PC-9 (cell line): ENCODE measurements at regions of chr19 and their contacts with region 1.

Region 1: DNA sequence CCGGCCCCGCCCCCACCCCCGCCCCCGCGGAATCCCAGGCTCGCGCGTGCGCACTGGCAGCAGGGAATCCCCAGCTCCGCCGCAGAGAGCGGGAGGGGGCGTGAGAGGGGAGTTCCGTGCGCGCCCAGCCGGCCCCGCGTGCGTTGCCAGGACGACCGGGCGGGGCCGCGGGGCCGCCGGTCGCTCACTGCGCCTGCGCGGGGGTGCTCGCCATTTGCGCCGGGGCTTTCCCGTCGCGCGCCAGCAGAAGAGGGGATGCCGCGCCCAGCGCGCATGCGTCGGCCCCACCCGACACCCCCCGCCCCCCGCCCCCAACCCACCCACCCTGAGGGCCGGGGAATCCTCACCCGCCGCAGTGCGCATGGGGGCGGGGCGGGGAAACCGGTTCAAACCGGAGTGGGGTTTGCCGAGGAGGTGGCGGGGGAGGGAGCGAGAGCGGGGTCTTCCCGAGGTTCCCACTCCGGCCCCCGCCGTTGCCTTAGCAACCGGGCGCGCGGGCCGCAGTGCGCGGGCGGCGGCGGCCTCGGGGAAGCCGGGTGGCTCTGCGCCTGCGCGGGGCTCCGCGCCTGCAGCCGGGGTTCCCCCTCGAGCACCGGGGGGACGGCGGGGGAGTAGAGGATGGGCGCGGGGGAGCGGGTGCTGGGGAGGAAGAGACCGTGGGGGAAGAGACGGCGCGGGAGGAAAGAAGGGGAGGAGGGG is 15.1 kb downstream of the CCDC124 start:
- DNase-seq: peak; percentile 76 to 95
- H3K4me3 ChIP-seq: peak overlapping the region; percentile 62; the same call in 1 of the 2 replicates
- H3K27ac ChIP-seq: no peak overlapping the region
- H3K4me1 ChIP-seq: peaks cover 26% of the 10 kb centered on the region
- H3K27me3 ChIP-seq: peaks cover 41% of the 10 kb centered on the region
- CTCF ChIP-seq: no peak

Region 2: DNA sequence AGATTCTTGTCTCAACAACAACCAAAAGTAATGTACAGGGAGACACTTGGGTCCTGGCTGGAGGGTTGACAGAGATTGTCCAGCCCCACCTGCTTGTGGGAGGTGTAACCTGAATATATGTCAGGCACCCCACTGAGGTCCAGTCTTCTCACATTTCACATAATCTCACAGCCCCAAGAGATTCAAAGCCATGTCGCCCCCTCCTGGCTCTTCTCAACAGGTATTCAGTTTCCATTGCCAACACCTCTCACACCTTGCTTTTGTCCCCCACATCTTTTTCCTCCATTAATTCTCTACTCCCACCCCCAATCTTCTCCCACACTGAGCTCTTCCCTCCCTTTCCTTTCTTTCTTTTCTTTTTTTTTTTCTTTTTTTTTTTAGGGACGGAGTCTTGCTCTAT is 271.0 kb before region 1 on chr19:
- CTCF ChIA-PET with region 1: no interaction called
- POLR2A ChIA-PET with region 1: interaction called, 19 read pairs
- intact Hi-C with region 1: no loop called
- DNase-seq: peak in 1 of 2 experiments; percentile 14
- H3K4me3 ChIP-seq: no peak overlapping the region
- H3K27ac ChIP-seq: no peak overlapping the region
- H3K4me1 ChIP-seq: peaks cover 9% of the 10 kb centered on the region
- H3K27me3 ChIP-seq: peaks cover 34% of the 10 kb centered on the region
- CTCF ChIP-seq: peak; percentile 50

Region 3: DNA sequence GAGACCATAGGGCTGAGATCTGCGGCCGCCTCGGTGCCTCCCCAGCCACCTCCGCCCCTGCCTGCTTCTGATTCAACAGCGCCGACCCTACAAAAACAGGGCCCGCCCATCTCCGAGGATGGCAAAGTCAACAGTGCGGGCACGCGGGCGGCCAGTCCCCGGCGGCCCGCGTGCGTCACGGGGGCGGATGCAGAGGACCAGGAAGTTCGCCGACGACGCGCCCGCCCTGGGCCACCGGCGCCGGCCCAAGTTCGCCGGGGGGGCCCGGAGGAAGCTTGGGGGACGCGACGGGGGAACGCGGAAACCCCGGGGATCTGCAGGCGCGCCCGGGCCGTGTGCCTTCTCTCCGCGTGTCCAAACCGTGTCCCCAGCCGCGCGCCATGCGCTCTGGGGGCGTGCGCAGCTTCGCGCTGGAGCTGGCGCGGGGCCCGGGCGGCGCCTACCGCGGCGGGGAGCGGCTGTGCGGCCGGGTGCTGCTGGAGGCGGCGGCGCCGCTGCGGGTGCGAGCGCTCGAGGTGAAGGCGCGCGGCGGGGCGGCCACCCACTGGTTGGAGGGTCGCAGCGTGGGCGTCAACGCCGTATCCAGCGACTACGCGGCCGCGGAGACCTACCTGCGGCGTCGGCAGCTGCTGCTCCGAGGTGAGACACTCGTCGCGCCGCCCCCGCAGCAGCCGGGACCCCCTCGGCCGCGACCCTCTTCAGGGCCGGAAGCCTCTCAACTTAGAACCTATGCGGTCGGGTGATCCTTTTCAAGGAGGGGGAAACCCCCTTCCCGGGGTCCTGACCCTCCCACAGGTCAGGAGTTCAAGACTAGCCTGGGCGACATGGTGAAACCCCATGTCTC is 53.2 kb after region 1 on chr19:
- CTCF ChIA-PET with region 1: interaction called, 6 read pairs
- POLR2A ChIA-PET with region 1: no interaction called
- intact Hi-C with region 1: loop called (anchors 2 kb)
- DNase-seq: peak; percentile 85 to 88
- H3K4me3 ChIP-seq: peak overlapping the region; percentile 99
- H3K27ac ChIP-seq: peak overlapping the region; percentile 75
- H3K4me1 ChIP-seq: peaks cover 38% of the 10 kb centered on the region
- H3K27me3 ChIP-seq: no peaks in the 10 kb centered on the region
- CTCF ChIP-seq: no peak

Region 4: GRCh38 chr19:18097217-18097992 is 149.4 kb after region 1 on chr19 and contains the start of gene MAST3:
- CTCF ChIA-PET with region 1: no interaction called
- POLR2A ChIA-PET with region 1: interaction called, 25 read pairs
- intact Hi-C with region 1: no loop called
- DNase-seq: peak; percentile 76 to 94
- H3K4me3 ChIP-seq: peak within 1 kb of the TSS; percentile 59; the same call in 1 of the 2 replicates
- H3K27ac ChIP-seq: no peak within 1 kb of the TSS
- H3K4me1 ChIP-seq: peaks cover 6% of the 10 kb centered on the region; the same call in 1 of the 2 replicates
- H3K27me3 ChIP-seq: no peaks in the 10 kb centered on the region
- CTCF ChIP-seq: no peak
- total RNA-seq, gene MAST3: 14.1 and 15.8 TPM in 2 replicates

Region 5: GRCh38 chr19:18274781-18275356 is 326.9 kb after region 1 on chr19:
- CTCF ChIA-PET with region 1: interaction called, 10 read pairs
- POLR2A ChIA-PET with region 1: no interaction called
- intact Hi-C with region 1: no loop called
- DNase-seq: peak; percentile 76 to 77
- H3K4me3 ChIP-seq: no peak overlapping the region
- H3K27ac ChIP-seq: peak overlapping the region; percentile 46
- H3K4me1 ChIP-seq: peaks cover 40% of the 10 kb centered on the region
- H3K27me3 ChIP-seq: no peaks in the 10 kb centered on the region
- CTCF ChIP-seq: no peak